Ascending aorta (tissue), 2 donors: ENCODE measurements at regions of chr3 and their contacts with region 1.

Region 1: GRCh38 chr3:194003125-194004057 is 132.6 kb upstream of the HES1 start:
- DNase-seq: peak; percentile 82 to 95
- H3K4me3 ChIP-seq: peak overlapping the region; percentile 55 to 57
- H3K27ac ChIP-seq: peak overlapping the region; percentile 70 to 90
- H3K4me1 ChIP-seq: peaks cover 4 to 29% of the 10 kb centered on the region in 2 donors
- H3K27me3 ChIP-seq: no peaks in the 10 kb centered on the region
- CTCF ChIP-seq: no peak

Region 2: GRCh38 chr3:193605876-193606275 is 397.5 kb before region 1 on chr3:
- intact Hi-C with region 1: no loop called
- DNase-seq: peak in 1 of 2 donors; percentile 66
- H3K4me3 ChIP-seq: no peak overlapping the region
- H3K27ac ChIP-seq: no peak overlapping the region
- H3K4me1 ChIP-seq: peaks cover 0 to 10% of the 10 kb centered on the region in 2 donors
- H3K27me3 ChIP-seq: no peaks in the 10 kb centered on the region
- CTCF ChIP-seq: peak in 2 of 3 experiments; percentile 65 to 70

Region 3: DNA sequence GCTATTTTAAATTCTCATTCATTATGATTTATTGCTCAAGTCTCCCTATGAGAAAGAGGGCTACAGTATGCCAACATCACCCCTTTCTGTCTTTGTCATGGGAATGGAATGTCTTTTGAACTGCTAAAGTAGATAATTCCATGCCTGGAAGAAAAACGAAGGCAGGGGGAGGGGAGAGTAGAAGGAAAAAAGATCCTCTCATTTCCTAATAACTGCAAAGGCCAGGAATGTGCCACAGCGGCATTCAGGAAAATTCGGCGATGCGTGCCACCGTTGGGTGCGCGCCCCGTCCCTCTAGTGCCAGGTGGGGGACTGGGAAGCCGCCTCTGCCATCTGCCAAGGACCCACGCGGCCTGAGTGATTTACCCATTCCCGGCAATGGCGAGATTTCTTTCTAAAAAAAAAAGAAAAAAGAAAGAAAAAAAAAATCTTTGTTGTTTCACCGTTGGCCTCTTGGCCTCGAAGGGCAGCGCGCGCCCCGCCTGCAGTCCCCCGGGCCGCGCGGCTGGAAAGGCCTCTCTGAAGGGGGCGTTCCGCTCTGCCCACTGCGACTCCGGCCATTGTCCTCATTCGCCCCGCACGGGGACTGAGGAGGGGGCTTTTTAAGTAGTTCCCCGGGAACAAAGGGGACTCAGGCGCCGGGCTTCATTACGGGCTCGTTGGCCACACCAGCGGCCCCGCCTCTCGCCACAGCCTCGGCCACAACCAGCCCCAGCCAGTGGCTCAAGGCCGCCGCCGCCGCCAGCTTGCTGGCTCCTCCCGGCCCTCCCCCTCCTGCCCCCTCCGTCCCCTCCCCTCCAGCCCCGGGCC is 293.3 kb after region 1 on chr3:
- intact Hi-C with region 1: loop called (anchors 5 kb)
- DNase-seq: peak in 1 of 2 donors; percentile 80
- H3K4me3 ChIP-seq: peak overlapping the region; percentile 35 to 52
- H3K27ac ChIP-seq: peak overlapping the region in 1 of 2 donors; percentile 1
- H3K4me1 ChIP-seq: peaks cover 0 to 18% of the 10 kb centered on the region in 2 donors
- H3K27me3 ChIP-seq: no peaks in the 10 kb centered on the region
- CTCF ChIP-seq: no peak